A549 (cell line): ENCODE measurements at regions of chr22 and their contacts with region 1.

Region 1: GRCh38 chr22:36856121-36856791 is 4.5 kb upstream of the NCF4 start:
- DNase-seq: peak; percentile 57 to 79
- ATAC-seq: peak; percentile 91 to 96
- H3K4me3 ChIP-seq: peak overlapping the region; percentile 8; the same call in 1 of the 3 replicates
- H3K27ac ChIP-seq: no peak overlapping the region
- H3K4me1 ChIP-seq: no peaks in the 10 kb centered on the region
- CTCF ChIP-seq: peak; percentile 99
- EP300 ChIP-seq: no peak
- POLR2A ChIP-seq: no peak
- RAD21 ChIP-seq: peak; percentile 68 to 80

Region 2: DNA sequence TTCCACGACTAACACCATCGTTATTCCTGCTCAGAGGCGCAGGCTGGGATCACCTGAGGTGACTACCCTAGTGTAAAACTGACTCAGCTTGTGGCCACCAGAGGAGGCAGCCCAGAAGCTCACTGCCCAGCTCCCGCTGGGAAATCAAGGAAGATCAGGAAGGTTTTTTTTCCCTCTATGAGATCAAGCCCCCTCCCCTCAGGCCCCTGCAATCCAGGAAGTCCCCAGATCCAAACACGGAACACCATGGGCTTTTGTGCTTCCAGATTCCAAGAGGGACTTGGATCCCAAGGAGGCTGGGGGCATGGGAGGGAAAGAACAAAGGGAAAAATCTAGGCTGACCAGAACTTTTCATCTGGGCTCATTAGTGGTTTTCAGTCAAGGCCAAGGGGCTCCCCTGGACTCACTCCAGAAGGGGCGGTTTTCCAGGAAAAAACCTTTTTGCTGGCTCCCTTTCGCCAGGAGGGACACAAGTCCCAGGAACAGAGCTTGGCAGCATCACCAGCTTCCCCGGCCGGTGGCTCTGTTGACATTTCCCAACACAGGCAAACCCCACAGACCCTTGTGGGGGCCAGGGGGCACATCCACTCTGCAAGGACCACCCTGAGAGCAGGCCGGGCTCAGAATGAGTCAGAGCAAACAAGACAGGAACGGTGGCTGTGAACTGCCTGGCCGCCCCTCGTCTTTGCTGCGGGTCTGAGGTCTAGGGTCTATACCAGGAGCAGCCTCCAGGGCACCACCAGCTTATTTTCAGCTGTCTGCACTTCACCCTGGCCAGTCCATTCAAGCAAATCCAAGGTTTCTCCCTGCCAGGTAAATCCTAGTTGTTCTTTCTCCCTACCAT is 505.3 kb before region 1 on chr22:
- CTCF ChIA-PET with region 1: no interaction called
- POLR2A ChIA-PET with region 1: no interaction called
- DNase-seq: peak; percentile 66 to 79
- ATAC-seq: peak; percentile 55 to 66
- H3K4me3 ChIP-seq: peak overlapping the region; percentile 20; the same call in 2 of the 3 replicates
- H3K27ac ChIP-seq: peak overlapping the region; percentile 98 to 99
- H3K4me1 ChIP-seq: peaks cover 86% of the 10 kb centered on the region
- CTCF ChIP-seq: no peak
- EP300 ChIP-seq: peak; percentile 65 to 85; a peak in 3 of 5 replicates
- POLR2A ChIP-seq: no peak
- RAD21 ChIP-seq: peak in 1 of 2 experiments; percentile 31; a peak in 2 of 5 replicates

Region 3: GRCh38 chr22:36546092-36546804 is 310.0 kb before region 1 on chr22:
- CTCF ChIA-PET with region 1: interaction called, 23 read pairs
- POLR2A ChIA-PET with region 1: no interaction called
- DNase-seq: peak; percentile 67 to 78
- ATAC-seq: peak; percentile 76 to 84
- H3K4me3 ChIP-seq: peak overlapping the region; percentile 36
- H3K27ac ChIP-seq: peak overlapping the region; percentile 58 to 79
- H3K4me1 ChIP-seq: peaks cover 34% of the 10 kb centered on the region
- CTCF ChIP-seq: peak; percentile 80
- EP300 ChIP-seq: no peak
- POLR2A ChIP-seq: no peak
- RAD21 ChIP-seq: peak; percentile 73 to 94

Region 4: GRCh38 chr22:36781656-36782627 is 74.3 kb before region 1 on chr22:
- CTCF ChIA-PET with region 1: interaction called, 35 read pairs
- POLR2A ChIA-PET with region 1: no interaction called
- DNase-seq: peak; percentile 74 to 75
- ATAC-seq: peak; percentile 96 to 97
- H3K4me3 ChIP-seq: no peak overlapping the region
- H3K27ac ChIP-seq: peak overlapping the region; percentile 43 to 60; a peak in 5 of 6 replicates
- H3K4me1 ChIP-seq: peaks cover 5% of the 10 kb centered on the region; the same call in 1 of the 3 replicates
- CTCF ChIP-seq: peak; percentile 77
- EP300 ChIP-seq: no peak
- POLR2A ChIP-seq: no peak
- RAD21 ChIP-seq: peak; percentile 82 to 87

Region 5: GRCh38 chr22:36808761-36809224 is 47.5 kb before region 1 on chr22:
- CTCF ChIA-PET with region 1: interaction called, 19 read pairs
- POLR2A ChIA-PET with region 1: no interaction called
- DNase-seq: no peak
- ATAC-seq: no peak
- H3K4me3 ChIP-seq: no peak overlapping the region
- H3K27ac ChIP-seq: no peak overlapping the region
- H3K4me1 ChIP-seq: no peaks in the 10 kb centered on the region
- CTCF ChIP-seq: no peak
- EP300 ChIP-seq: no peak
- POLR2A ChIP-seq: no peak
- RAD21 ChIP-seq: no peak

Region 6: DNA sequence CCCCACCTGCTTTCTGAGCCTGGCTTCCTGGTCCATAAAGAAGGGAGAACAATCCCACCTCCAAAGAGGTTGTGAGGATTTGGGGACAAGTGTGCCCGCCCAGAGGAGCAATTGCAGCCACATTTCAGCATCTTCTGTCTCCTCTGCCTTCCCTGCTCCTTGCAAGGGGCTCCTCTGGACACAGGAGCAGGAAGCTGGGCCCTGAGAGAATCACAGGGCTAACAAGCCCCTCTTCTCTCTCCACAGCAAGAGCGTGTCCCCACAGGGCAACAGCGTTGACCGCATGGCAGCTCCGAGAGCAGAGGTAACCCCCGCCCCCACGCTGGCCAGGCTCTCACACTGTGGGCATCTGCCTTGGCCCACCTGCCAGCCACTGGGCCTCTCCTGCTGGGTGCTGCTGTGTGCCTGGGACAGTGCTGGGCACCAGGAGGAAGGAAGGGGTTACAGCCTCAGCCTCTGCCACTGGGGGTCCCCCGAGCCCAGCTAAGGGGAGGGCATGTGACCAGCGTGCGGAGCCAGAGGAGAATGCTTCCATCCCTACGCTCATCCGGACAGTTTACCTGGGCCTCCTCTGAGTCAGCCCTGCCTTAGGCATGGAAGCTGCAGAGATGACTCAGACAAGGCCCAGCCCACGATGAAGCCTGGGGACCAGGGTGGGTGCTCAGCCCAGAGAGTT is 15.3 kb after region 1 on chr22:
- CTCF ChIA-PET with region 1: interaction called, 30 read pairs
- POLR2A ChIA-PET with region 1: no interaction called
- DNase-seq: no peak
- ATAC-seq: no peak
- H3K4me3 ChIP-seq: no peak overlapping the region
- H3K27ac ChIP-seq: no peak overlapping the region
- H3K4me1 ChIP-seq: peaks cover 4% of the 10 kb centered on the region; the same call in 1 of the 3 replicates
- CTCF ChIP-seq: no peak
- EP300 ChIP-seq: no peak
- POLR2A ChIP-seq: no peak
- RAD21 ChIP-seq: no peak

Region 7: DNA sequence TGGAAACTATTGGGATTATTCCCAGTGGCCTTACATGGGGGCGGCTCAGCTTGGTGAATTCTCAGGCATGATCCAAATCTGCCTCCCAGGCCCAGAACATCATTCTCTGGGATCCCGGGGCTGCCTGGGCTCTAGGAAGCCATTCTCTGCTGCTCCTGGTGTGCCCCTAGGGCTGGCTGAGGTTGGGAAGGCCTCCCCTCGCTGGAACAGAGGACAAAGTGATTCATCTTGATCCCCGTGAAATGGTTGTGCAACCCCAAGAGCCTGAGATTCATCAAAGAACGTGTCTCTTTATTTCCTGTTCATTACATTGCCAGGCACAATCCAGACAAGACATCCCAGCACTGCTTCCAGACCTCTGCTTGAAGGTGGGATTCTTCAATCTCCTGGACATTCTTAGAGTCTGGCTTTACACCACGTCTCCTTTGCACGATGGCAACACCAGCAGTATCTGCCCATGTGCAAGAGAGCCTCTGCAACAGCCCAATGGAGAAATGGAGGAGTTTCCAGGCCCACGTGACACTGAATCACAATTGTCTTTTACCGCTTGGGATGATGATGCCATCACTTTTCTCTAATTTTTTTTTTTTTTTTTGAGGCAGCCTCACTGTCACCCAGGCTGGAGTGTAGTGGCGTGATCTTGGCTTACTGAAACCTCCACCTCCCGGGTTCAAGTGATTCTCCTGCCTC is 110.7 kb after region 1 on chr22:
- CTCF ChIA-PET with region 1: interaction called, 10 read pairs
- POLR2A ChIA-PET with region 1: no interaction called
- DNase-seq: no peak
- ATAC-seq: no peak
- H3K4me3 ChIP-seq: no peak overlapping the region
- H3K27ac ChIP-seq: no peak overlapping the region
- H3K4me1 ChIP-seq: no peaks in the 10 kb centered on the region
- CTCF ChIP-seq: no peak
- EP300 ChIP-seq: no peak
- POLR2A ChIP-seq: no peak
- RAD21 ChIP-seq: no peak

Region 8: DNA sequence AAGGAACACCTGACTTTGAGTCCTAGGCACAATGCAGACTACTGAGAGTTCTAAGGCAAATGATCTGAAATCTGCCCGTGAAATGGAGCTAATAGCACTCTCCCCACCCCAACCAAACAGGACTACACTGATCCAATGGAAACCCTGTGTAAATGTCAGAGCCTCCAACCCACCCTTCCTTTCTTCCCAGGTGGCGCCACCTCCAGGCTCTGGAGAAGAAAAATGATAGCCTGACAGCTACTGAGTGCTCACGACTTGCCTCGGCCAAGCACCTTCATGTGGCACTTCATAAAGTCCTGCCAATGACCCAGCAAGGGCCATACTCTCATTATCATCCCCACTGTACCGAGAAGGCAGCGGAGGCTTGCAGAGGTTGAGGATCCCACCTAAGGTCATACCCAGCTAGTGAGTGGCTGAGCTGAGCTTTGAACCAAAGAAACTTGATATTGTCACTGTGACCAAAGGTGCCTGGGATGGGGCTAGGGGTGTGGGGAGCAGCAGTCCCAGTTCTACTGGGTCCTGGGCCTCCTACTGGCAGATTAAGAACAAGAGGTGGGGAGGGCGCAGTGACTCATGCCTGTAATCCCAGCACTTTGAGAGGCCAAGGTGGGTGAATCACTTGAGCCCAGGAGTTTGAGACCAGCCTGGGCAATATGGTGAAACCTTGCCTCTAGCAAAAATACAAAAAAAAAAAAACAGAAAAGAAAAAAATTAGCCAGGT is 142.5 kb after region 1 on chr22:
- CTCF ChIA-PET with region 1: no interaction called
- POLR2A ChIA-PET with region 1: no interaction called
- DNase-seq: no peak
- ATAC-seq: peak in 1 of 2 experiments; percentile 48; a peak in 4 of 6 replicates
- H3K4me3 ChIP-seq: no peak overlapping the region
- H3K27ac ChIP-seq: peak overlapping the region; percentile 22 to 25; a peak in 2 of 6 replicates
- H3K4me1 ChIP-seq: peaks cover 12% of the 10 kb centered on the region
- CTCF ChIP-seq: no peak
- EP300 ChIP-seq: no peak
- POLR2A ChIP-seq: no peak
- RAD21 ChIP-seq: no peak

Region 9: GRCh38 chr22:37043828-37044538 is 187.7 kb after region 1 on chr22:
- CTCF ChIA-PET with region 1: interaction called, 16 read pairs
- POLR2A ChIA-PET with region 1: no interaction called
- DNase-seq: peak; percentile 82 to 86
- ATAC-seq: peak; percentile 96 to 99
- H3K4me3 ChIP-seq: no peak overlapping the region
- H3K27ac ChIP-seq: peak overlapping the region; percentile 84 to 85
- H3K4me1 ChIP-seq: peaks cover 51% of the 10 kb centered on the region
- CTCF ChIP-seq: peak; percentile 59; the same call in 2 of the 3 replicates
- EP300 ChIP-seq: no peak
- POLR2A ChIP-seq: no peak
- RAD21 ChIP-seq: peak; percentile 70 to 72